ENCODE measurements at regions of chr16 and their contacts with region 1.

Region 1: DNA sequence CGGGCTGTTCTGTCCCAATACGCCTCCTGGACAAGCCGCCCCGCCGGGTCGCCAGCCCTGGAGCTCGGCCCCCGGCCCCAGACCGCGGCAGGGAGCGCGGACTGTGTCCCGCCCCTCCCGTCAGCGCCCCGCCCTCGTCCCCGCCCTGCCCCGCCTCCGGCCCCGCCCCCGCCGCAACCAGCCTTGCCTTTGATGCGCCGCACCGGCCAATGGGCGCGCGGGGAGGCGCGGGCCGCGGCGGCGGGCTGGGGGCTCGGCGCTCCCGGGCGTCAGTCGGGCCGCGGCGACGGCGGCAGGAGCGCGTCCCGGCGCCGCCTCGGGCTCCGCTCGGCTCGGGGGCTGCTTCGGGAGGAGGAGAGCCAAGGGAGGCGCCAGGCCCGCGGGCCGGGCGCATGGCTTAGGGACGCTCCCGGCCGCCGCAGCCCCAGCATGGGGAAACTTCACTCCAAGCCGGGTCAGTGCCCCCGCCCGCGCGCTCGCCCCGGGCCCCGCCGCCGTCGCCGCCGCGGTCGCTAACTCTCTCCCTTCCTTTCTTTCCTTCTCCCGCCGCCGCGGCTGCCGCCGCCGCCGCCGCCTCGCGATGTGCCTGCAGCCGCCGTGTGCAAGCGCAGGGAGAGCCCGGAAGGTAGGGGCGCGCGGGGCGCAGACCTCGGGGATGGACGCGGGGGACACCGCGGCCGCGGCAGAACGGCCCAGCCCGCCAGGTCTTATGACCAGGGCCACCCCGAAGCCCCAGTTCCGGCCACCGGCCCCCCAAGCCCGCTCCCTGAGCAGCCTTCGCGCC is at the start of gene NKD1:
- DNase-seq: peak; percentile 60 to 85 (median 71)
- ATAC-seq: peak; percentile 86
- H3K4me3 ChIP-seq: peak within 1 kb of the TSS; percentile 67
- H3K4me3 Mint-ChIP-seq: peak within 1 kb of the TSS; percentile 85 to 95 (median 88)
- H3K27ac ChIP-seq: peak within 1 kb of the TSS; percentile 72
- H3K27ac Mint-ChIP-seq: peak within 1 kb of the TSS; percentile 72 to 97 (median 91)
- H3K4me1 ChIP-seq: peaks cover 9 to 26% of the 10 kb centered on the region in 2 donors
- H3K4me1 Mint-ChIP-seq: peaks cover 14 to 63% (median 43%) of the 10 kb centered on the region in 7 donors
- H3K27me3 ChIP-seq: no peaks in the 10 kb centered on the region
- H3K27me3 Mint-ChIP-seq: peaks cover 0 to 76% (median 0%) of the 10 kb centered on the region in 5 donors
- total RNA-seq, gene NKD1: 1.4 to 7.9 (median 6.2) TPM

Region 2: GRCh38 chr16:50024684-50025536 is 523.4 kb before region 1 on chr16 and contains the start of gene CNEP1R1:
- CTCF ChIA-PET with region 1: no interaction called
- POLR2A ChIA-PET with region 1: no interaction called
- intact Hi-C with region 1: loop called (anchors 2 kb)
- DNase-seq: peak; percentile 82 to 95 (median 92)
- ATAC-seq: peak; percentile 98
- H3K4me3 ChIP-seq: peak within 1 kb of the TSS; percentile 97
- H3K4me3 Mint-ChIP-seq: peak within 1 kb of the TSS; percentile 88 to 99 (median 96)
- H3K27ac ChIP-seq: peak within 1 kb of the TSS; percentile 81
- H3K27ac Mint-ChIP-seq: peak within 1 kb of the TSS; percentile 87 to 97 (median 94)
- H3K4me1 ChIP-seq: peaks cover 11 to 16% of the 10 kb centered on the region in 2 donors
- H3K4me1 Mint-ChIP-seq: peaks cover 5 to 42% (median 28%) of the 10 kb centered on the region in 7 donors
- H3K27me3 ChIP-seq: no peaks in the 10 kb centered on the region
- H3K27me3 Mint-ChIP-seq: peaks cover 0 to 16% (median 0%) of the 10 kb centered on the region in 5 donors
- total RNA-seq, gene CNEP1R1: 26.8 to 41.0 (median 34.3) TPM

Region 3: DNA sequence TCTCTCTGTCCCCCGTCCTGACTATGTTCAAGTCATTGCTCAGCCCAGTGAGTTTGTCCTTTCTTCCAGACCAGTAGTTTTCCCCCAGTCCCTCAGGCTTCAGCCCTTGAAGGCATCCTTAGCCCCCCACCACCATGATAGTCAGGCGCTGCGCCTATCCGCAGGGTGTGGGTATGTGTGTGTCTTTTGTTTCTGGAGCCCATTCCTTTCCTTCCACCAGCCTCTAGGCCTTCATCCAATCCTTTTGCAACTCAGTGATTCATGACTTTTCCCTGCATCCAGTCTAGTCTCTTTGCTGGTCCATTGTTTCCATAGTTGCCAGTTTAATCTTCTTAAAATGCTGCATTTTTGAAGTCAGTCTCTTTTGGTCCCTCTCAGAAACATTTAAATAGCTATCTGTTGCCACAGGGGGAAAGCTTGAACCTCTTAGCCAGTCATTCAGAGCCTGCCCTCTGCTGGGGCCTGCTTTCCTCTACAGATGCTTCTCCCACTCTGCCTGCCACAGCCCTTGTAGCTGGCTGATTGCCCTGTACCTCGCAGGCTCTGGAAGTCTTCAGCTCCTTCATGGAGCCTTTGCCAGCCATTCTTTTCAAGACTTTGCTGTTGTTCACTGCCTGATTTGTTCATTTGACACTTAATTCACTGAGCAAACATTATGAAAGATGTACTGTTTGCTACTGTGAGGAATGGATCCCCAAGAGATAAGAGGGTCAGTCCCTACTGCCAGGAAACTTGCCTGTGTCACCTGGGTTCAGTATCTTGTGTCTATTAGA is 337.9 kb before region 1 on chr16:
- CTCF ChIA-PET with region 1: no interaction called
- POLR2A ChIA-PET with region 1: no interaction called
- intact Hi-C with region 1: loop called in 1 of 2 experiments (anchors 1 kb)
- DNase-seq: peak; percentile 25 to 73 (median 61)
- ATAC-seq: peak; percentile 93
- H3K4me3 ChIP-seq: no peak overlapping the region
- H3K4me3 Mint-ChIP-seq: no peak overlapping the region
- H3K27ac ChIP-seq: no peak overlapping the region
- H3K27ac Mint-ChIP-seq: peak overlapping the region; percentile 48 to 90 (median 83)
- H3K4me1 ChIP-seq: no peaks in the 10 kb centered on the region
- H3K4me1 Mint-ChIP-seq: peaks cover 17 to 50% (median 38%) of the 10 kb centered on the region in 7 donors
- H3K27me3 ChIP-seq: no peaks in the 10 kb centered on the region
- H3K27me3 Mint-ChIP-seq: no peaks in the 10 kb centered on the region

Region 4: DNA sequence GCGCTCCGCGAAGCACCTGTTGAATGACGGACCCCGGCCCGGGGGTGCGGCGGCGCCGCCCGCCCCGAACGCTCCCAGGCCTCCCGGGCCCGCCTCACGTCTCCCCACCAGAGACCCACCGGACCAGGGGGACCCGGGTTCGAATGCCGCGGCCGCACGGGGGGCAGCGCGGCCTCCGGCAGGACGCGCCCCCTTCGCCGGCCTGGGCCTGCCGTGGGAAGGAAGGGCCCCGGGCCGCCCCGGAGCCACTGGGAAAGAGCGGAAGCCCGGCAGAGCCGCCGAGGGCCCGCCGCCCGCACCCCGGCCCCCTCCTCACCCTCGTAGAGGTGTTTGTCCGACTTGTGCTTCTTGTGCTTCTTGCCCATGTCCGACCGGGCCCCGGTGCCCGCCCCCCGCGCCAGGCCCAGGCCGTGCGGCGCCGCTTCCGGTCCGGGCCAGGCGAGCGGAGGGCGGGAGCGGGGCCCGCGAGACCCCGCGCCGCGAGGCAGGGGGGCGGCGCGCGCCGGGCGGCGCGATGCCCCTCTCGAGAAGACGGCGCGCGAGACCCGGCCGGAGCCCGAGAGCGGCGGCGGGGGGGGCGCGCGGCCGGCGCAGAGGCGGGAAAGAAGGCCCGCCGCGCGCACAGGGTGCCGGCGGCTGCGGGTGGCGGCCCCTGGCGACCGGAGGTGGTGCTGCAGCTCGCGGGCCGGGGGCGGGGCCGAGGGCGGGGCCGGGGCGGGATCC is 179.7 kb before region 1 on chr16 and contains the start of gene BRD7:
- CTCF ChIA-PET with region 1: no interaction called
- POLR2A ChIA-PET with region 1: no interaction called
- intact Hi-C with region 1: loop called (anchors 1 to 2 kb)
- DNase-seq: peak; percentile 50 to 82 (median 68)
- ATAC-seq: peak; percentile 98
- H3K4me3 ChIP-seq: peak within 1 kb of the TSS; percentile 61
- H3K4me3 Mint-ChIP-seq: peak within 1 kb of the TSS; percentile 92 to 98 (median 96)
- H3K27ac ChIP-seq: peak within 1 kb of the TSS; percentile 86
- H3K27ac Mint-ChIP-seq: peak within 1 kb of the TSS; percentile 92 to 99 (median 96)
- H3K4me1 ChIP-seq: peaks cover 27 to 39% of the 10 kb centered on the region in 2 donors
- H3K4me1 Mint-ChIP-seq: peaks cover 40 to 58% (median 56%) of the 10 kb centered on the region in 7 donors
- H3K27me3 ChIP-seq: no peaks in the 10 kb centered on the region
- H3K27me3 Mint-ChIP-seq: no peaks in the 10 kb centered on the region
- total RNA-seq, gene BRD7: 80.9 to 91.1 (median 85.0) TPM

Region 5: DNA sequence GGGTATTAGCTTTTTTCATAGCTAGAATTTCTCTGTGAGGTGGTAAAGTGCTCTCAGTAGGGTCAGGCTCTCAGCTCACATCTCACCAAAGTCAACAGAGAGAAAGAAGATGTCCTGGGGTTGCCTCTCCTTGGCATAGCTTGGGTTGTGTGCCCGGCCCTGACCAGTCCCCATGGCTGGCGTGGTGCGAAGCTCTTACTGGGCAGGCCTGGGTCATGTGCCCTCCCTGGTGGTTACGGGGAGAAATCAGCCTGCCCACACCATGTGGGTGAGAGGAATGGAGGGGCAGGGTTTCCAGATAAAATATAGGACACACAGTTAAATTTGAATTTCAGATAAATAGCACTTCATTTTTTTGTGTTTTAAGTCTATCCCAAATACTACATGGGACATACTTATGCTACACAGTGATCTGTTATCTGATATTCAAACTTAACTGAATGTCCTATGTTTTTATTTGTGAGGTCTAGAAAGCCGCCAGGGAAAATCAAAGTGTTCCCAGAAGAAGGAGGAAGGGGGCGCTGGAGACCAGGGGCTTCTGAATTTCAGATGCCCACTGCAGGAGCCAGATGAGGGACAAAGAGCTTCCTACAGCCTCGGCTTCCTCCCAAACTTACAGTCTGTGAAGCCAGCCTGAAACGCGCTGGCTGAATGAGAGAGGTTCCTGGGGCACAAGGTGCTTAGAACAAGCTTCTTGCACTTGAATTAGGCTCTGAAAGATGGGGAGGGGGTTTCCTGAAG is 45.3 kb after region 1 on chr16:
- CTCF ChIA-PET with region 1: no interaction called
- POLR2A ChIA-PET with region 1: no interaction called
- intact Hi-C with region 1: loop called (anchors 1 to 5 kb)
- DNase-seq: no peak
- ATAC-seq: no peak
- H3K4me3 ChIP-seq: no peak overlapping the region
- H3K4me3 Mint-ChIP-seq: no peak overlapping the region
- H3K27ac ChIP-seq: no peak overlapping the region
- H3K27ac Mint-ChIP-seq: peak overlapping the region in 1 of 9 donors; percentile 55
- H3K4me1 ChIP-seq: peaks cover 0 to 30% of the 10 kb centered on the region in 2 donors
- H3K4me1 Mint-ChIP-seq: peaks cover 15 to 56% (median 43%) of the 10 kb centered on the region in 7 donors
- H3K27me3 ChIP-seq: no peaks in the 10 kb centered on the region
- H3K27me3 Mint-ChIP-seq: no peaks in the 10 kb centered on the region

Region 6: GRCh38 chr16:50665128-50665878 is 117.0 kb after region 1 on chr16:
- CTCF ChIA-PET with region 1: interaction called, 3 read pairs
- POLR2A ChIA-PET with region 1: interaction called, 4 read pairs
- intact Hi-C with region 1: loop called (anchors 1 to 2 kb)
- DNase-seq: peak; percentile 71 to 90 (median 77)
- ATAC-seq: peak; percentile 80
- H3K4me3 ChIP-seq: peak overlapping the region; percentile 60
- H3K4me3 Mint-ChIP-seq: peak overlapping the region; percentile 73 to 87 (median 84)
- H3K27ac ChIP-seq: peak overlapping the region; percentile 62
- H3K27ac Mint-ChIP-seq: peak overlapping the region; percentile 82 to 97 (median 89)
- H3K4me1 ChIP-seq: peaks cover 17% of the 10 kb centered on the region in 2 donors
- H3K4me1 Mint-ChIP-seq: peaks cover 28 to 49% (median 44%) of the 10 kb centered on the region in 7 donors
- H3K27me3 ChIP-seq: no peaks in the 10 kb centered on the region
- H3K27me3 Mint-ChIP-seq: no peaks in the 10 kb centered on the region

Region 7: GRCh38 chr16:50747207-50747956 is 199.1 kb after region 1 on chr16:
- CTCF ChIA-PET with region 1: no interaction called
- POLR2A ChIA-PET with region 1: interaction called, 4 read pairs
- intact Hi-C with region 1: loop called (anchors 1 to 2 kb)
- DNase-seq: peak in 7 of 9 donors; percentile 52 to 80 (median 73)
- ATAC-seq: peak; percentile 87
- H3K4me3 ChIP-seq: peak overlapping the region; percentile 33
- H3K4me3 Mint-ChIP-seq: peak overlapping the region; percentile 74 to 99 (median 94)
- H3K27ac ChIP-seq: peak overlapping the region; percentile 100
- H3K27ac Mint-ChIP-seq: peak overlapping the region; percentile 85 to 98 (median 93)
- H3K4me1 ChIP-seq: peaks cover 30 to 66% of the 10 kb centered on the region in 2 donors
- H3K4me1 Mint-ChIP-seq: peaks cover 34 to 78% (median 69%) of the 10 kb centered on the region in 7 donors
- H3K27me3 ChIP-seq: no peaks in the 10 kb centered on the region
- H3K27me3 Mint-ChIP-seq: no peaks in the 10 kb centered on the region

Measured in naive thymus-derived CD4-positive, alpha-beta T cell (primary cell).